HEK293T (cell line): ENCODE measurements at regions of chr9 and their contacts with region 1.

Region 1: GRCh38 chr9:132235946-132236661 is 74.2 kb downstream of the NTNG2 start:
- DNase-seq: peak; percentile 80

Region 2: GRCh38 chr9:132169672-132170392 is 66.3 kb before region 1 on chr9:
- CTCF ChIA-PET with region 1: interaction called, 41 read pairs
- POLR2A ChIA-PET with region 1: no interaction called
- DNase-seq: peak; percentile 81

Region 3: DNA sequence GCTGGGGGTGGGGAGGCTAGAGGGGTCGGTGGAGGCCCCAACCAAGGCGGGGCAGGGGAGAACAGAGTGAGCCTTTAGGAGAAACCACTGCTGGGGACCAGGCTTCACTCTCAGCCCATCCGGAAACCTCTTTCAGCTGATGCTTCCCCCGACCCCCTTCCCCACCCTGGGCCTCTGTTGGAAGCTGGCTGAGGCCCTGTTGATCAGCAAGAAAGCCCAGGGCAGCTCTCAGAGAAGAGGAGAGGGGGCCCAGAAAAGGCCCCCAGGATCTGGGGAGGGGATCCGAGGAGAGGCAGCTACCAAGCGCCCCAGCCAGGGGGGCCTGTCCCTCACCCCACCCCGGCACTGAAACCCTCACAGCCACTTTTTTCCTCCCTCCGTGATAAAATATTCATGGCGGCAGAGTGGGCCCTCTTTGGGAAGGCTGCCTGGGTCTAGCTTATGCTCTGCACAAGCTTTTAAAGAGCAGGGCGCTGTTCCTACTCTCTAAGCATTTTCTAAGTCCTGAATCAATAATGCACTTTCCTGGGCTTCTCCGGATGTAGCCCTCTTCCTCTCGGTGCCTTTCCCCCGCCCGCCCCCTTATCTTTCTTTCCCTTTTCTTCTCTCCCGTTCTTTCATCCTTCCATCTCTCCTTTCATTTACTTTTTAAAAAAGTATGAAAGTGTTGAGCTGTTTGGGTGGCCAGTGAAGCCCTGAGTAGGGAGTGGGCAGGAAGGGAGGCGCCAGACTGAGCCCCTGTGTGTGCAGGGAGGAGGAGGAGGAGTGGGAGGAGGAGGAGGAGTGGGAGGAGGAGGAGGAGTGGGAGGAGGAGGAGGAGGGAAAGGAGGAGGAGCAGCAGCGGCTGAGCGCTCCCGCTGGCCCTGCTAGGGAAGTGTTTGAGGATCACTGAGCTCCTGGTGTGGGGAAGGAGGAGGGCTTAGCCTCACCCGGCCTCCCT is 50.8 kb before region 1 on chr9:
- CTCF ChIA-PET with region 1: interaction called, 11 read pairs
- POLR2A ChIA-PET with region 1: interaction called, 4 read pairs
- DNase-seq: no peak